ENCODE measurements at regions of chr11 and their contacts with region 1.

Region 1: GRCh38 chr11:112697381-112698178 is 263.6 kb upstream of the NCAM1 start:
- DNase-seq: no peak
- ATAC-seq: 0 out of 2 replicates have a peak, but pooled peaks have one; percentile 52
- H3K4me3 ChIP-seq: no peak overlapping the region
- H3K27ac ChIP-seq: no peak overlapping the region
- H3K4me1 ChIP-seq: no peaks in the 10 kb centered on the region
- H3K27me3 ChIP-seq: peaks cover 33% of the 10 kb centered on the region; the same call in 1 of the 2 replicates
- CTCF ChIP-seq: peak in 2 of 3 experiments; percentile 25 to 42; a peak in 2 of 6 replicates
- POLR2A ChIP-seq: no peak
- RAD21 ChIP-seq: no peak

Region 2: GRCh38 chr11:112715056-112715455 is 17.5 kb after region 1 on chr11:
- CTCF ChIA-PET with region 1: no interaction called
- POLR2A ChIA-PET with region 1: no interaction called
- RAD21 ChIA-PET with region 1: no interaction called
- intact Hi-C with region 1: loop called (anchors 2 kb)
- DNase-seq: no peak
- ATAC-seq: no peak
- H3K4me3 ChIP-seq: no peak overlapping the region
- H3K27ac ChIP-seq: no peak overlapping the region
- H3K4me1 ChIP-seq: no peaks in the 10 kb centered on the region
- H3K27me3 ChIP-seq: peaks cover 16% of the 10 kb centered on the region
- CTCF ChIP-seq: no peak
- POLR2A ChIP-seq: no peak
- RAD21 ChIP-seq: no peak

Measured in HCT116 (cell line).